ENCODE measurements at regions of chr12 and their contacts with region 1.

Region 1: DNA sequence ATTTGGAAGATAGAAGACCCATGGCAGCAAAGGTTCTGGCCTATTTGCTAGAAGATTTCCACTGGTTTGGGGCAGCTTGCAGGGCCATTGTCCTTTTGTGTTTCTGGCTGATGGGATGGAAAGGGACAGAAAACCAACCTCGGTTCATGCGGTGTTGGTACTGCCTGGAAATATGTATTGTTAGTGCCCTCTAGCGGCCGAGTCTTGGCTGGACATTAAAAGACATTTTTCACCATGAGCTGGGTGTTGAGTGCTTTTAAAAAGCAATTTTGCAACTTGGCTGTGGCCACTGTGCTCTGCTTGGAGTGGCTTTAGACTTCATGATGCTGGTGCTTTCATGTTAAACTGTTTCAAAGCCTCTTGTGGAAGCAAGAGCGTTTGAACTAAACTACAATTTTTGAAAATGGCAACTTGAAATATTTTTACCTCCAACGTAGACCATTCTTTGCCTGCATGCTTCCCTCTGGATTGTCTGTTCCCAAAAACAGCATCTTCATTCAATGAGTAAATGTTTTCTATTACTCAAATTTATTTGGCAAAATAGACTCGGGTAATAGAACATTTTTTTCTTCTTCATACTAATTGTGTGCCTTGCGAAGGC is 102.7 kb upstream of the TBX5 start:
- DNase-seq: peak; percentile 67 to 69
- H3K4me3 ChIP-seq: no peak overlapping the region
- H3K4me3 Mint-ChIP-seq: no peak overlapping the region
- H3K27ac Mint-ChIP-seq: no peak overlapping the region
- H3K4me1 ChIP-seq: no peaks in the 10 kb centered on the region
- H3K4me1 Mint-ChIP-seq: no peaks in the 10 kb centered on the region
- H3K27me3 ChIP-seq: no peaks in the 10 kb centered on the region; the same call in 1 of the 2 replicates
- H3K27me3 Mint-ChIP-seq: peaks cover 14% of the 10 kb centered on the region
- CTCF ChIP-seq: peak; percentile 58 to 69

Region 2: GRCh38 chr12:114166362-114166761 is 342.3 kb before region 1 on chr12:
- CTCF ChIA-PET with region 1: interaction called, 10 read pairs
- POLR2A ChIA-PET with region 1: no interaction called
- intact Hi-C with region 1: loop called (anchors 5 kb)
- DNase-seq: peak in 1 of 2 experiments; percentile 38
- H3K4me3 ChIP-seq: no peak overlapping the region
- H3K4me3 Mint-ChIP-seq: no peak overlapping the region
- H3K27ac Mint-ChIP-seq: no peak overlapping the region
- H3K4me1 ChIP-seq: no peaks in the 10 kb centered on the region
- H3K4me1 Mint-ChIP-seq: no peaks in the 10 kb centered on the region
- H3K27me3 ChIP-seq: no peaks in the 10 kb centered on the region; the same call in 1 of the 2 replicates
- H3K27me3 Mint-ChIP-seq: peaks cover 8% of the 10 kb centered on the region
- CTCF ChIP-seq: peak; percentile 43 to 52

Region 3: GRCh38 chr12:114355389-114356088 is 153.1 kb before region 1 on chr12:
- CTCF ChIA-PET with region 1: interaction called, 5 read pairs
- POLR2A ChIA-PET with region 1: no interaction called
- intact Hi-C with region 1: loop called (anchors 1 kb)
- DNase-seq: peak in 1 of 2 experiments; percentile 17
- H3K4me3 ChIP-seq: no peak overlapping the region
- H3K4me3 Mint-ChIP-seq: no peak overlapping the region
- H3K27ac Mint-ChIP-seq: no peak overlapping the region
- H3K4me1 ChIP-seq: no peaks in the 10 kb centered on the region
- H3K4me1 Mint-ChIP-seq: no peaks in the 10 kb centered on the region
- H3K27me3 ChIP-seq: no peaks in the 10 kb centered on the region; the same call in 1 of the 2 replicates
- H3K27me3 Mint-ChIP-seq: peaks cover 12% of the 10 kb centered on the region
- CTCF ChIP-seq: peak in 1 of 2 experiments; percentile 23

Measured in Caco-2 (cell line).